ENCODE measurements at regions of chr14 and their contacts with region 1.

Region 1: DNA sequence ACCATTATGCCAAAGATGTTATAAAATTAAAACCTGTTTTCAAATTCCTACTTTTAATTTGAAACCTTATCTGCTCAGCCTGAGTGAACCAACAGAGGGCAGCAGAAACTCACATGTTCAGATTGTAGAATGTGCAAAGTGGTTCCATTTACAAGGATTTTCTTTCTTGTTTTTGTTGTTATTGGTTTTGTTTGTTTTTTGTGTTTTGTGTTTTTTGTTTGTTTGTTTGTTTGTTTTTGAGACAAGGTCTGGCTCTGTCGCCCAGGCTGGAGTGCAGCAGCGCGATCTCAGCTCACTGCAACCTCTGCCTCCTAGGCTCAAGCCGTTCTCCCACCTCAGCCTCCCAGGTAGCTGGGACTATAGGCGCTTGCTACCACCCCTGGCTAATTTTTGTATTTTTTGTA is 22.8 kb upstream of the GARIN2 start:
- DNase-seq: peak; percentile 34
- CTCF ChIP-seq: peak; percentile 50

Region 2: DNA sequence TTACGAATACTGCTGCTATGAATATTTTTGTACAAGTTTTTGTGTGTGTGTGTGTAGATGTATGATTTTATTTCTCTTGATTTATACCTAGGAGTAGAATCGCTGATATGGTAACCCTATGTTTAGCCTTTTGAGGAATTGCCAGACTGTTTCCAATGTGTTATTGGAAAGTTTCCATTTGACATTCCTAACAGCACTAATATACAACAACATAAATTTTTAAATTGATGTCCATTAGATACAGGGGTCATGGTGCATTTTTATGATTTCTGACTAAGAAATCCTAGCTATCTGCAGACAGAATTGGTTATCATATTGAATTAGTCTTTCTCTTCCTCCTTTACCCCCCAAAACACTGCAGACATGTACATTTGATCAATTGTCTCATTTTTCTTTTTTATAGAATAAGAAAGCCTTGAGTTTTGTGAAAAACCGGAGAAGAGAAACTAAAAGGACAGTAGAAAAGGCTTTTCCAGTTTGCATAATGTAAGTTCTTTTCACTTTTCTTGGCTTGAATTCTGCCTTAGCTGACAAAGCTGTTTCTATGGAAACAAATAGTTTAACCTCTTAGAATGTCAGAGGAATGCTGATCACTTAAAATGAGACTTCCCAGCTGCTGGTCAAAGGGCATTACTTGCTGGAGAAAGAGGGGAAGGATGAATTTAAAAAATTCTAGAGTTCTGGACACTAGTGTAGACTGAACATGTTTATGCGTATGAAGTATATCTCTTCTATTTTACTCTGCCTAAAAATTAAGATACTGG is 103.0 kb after region 1 on chr14:
- in situ Hi-C with region 1: loop called (anchors 10 kb)
- DNase-seq: no peak
- CTCF ChIP-seq: no peak

Measured in GM13976 (cell line).